ENCODE measurements at regions of chr1 and their contacts with region 1.

Region 1: DNA sequence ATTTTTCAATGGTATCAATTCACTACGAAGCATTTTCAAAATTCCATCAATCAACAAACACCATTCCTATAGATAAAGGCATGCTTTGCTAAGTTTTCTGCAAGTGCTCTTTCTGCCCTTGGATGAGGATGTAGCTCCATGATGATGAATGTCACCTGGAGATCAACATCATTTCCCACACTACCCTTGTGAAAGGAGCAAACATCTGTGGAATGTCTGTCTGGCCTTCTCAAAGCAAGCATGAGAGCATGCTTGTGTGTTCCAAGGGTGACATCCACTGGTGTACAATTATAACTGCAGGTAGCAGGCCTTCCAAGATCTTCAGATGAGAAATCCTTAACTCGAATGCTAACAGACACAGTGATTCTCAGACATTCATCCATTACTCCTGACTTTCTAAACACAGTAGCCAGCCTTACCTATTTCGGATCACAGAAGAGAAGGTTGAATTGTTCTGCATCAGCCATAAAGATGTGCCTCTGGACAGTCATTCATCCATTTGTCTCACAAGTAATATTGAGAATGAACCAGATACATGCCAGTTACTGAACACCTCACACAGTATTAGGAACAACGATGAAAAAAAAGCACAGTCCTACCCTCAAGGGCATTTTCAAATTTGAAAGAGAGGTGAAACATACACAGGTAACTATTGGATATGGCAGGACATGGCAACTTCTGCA is 162.4 kb downstream of the TPR start:
- DNase-seq: peak; percentile 45
- H3K4me3 ChIP-seq: no peak overlapping the region
- H3K27me3 ChIP-seq: no peaks in the 10 kb centered on the region
- CTCF ChIP-seq: peak; percentile 84

Region 2: GRCh38 chr1:185720633-185721272 is 491.9 kb before region 1 on chr1:
- CTCF ChIA-PET with region 1: interaction called, 22 read pairs
- POLR2A ChIA-PET with region 1: no interaction called
- DNase-seq: no peak
- H3K4me3 ChIP-seq: no peak overlapping the region
- H3K27me3 ChIP-seq: no peaks in the 10 kb centered on the region
- CTCF ChIP-seq: peak; percentile 64

Region 3: DNA sequence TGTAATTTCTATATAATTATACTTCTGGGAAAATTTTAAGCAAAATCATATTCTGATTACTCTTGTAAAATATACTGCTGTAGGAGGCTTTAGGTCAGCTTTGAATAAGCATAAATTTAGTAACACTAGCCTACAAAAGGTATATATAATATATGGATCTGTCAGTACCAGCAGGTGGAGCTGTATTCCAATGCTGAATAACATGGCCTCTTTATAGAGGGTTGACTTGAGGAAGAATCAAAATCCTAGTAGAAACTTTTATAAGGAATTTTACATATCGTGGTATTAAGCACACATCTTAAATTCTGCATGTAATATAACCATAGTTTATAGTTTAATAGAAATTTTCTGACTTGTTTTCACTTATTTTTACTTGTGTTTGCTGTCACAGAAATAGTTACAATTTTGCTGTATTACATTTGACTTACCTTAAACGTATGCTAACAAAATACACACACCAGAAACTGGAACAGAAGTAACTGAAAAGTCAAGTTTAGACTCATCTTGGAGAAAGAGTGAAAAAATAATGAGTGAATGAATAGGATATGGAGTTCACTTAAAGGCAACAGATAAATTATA is 399.2 kb before region 1 on chr1:
- CTCF ChIA-PET with region 1: interaction called, 24 read pairs
- POLR2A ChIA-PET with region 1: no interaction called
- DNase-seq: no peak
- H3K4me3 ChIP-seq: no peak overlapping the region
- H3K27me3 ChIP-seq: no peaks in the 10 kb centered on the region
- CTCF ChIP-seq: peak; percentile 69

Region 4: GRCh38 chr1:186129758-186130157 is 82.9 kb before region 1 on chr1:
- CTCF ChIA-PET with region 1: no interaction called
- POLR2A ChIA-PET with region 1: no interaction called
- DNase-seq: no peak
- H3K4me3 ChIP-seq: no peak overlapping the region
- H3K27me3 ChIP-seq: no peaks in the 10 kb centered on the region
- CTCF ChIP-seq: no peak

Region 5: DNA sequence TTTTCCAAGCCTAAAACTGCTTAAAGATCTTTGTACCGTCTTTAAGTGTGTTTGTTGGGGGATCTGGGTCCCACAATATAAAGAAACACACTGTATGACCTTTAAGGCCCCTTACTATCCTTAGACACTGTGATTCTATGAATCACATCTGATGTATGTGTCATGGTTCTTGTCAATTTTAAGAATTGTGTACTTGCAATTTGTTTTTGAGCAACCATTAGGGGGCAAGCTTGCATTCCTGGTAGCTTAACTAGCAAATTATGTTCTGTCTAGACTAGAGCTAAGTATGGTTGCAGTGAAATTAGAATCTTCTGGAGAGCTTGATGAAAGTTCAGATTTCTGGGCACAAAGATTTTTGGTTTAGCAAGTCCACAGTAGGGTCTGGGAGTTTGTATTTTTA is 57.1 kb before region 1 on chr1:
- CTCF ChIA-PET with region 1: interaction called, 25 read pairs
- POLR2A ChIA-PET with region 1: no interaction called
- DNase-seq: peak; percentile 21
- H3K4me3 ChIP-seq: no peak overlapping the region
- H3K27me3 ChIP-seq: no peaks in the 10 kb centered on the region
- CTCF ChIP-seq: peak; percentile 67

Region 6: GRCh38 chr1:186363891-186364290 is 151.2 kb after region 1 on chr1:
- CTCF ChIA-PET with region 1: no interaction called
- POLR2A ChIA-PET with region 1: no interaction called
- DNase-seq: no peak
- H3K4me3 ChIP-seq: no peak overlapping the region
- H3K27me3 ChIP-seq: no peaks in the 10 kb centered on the region
- CTCF ChIP-seq: no peak